ENCODE measurements at regions of chr2 and their contacts with region 1.

Region 1: DNA sequence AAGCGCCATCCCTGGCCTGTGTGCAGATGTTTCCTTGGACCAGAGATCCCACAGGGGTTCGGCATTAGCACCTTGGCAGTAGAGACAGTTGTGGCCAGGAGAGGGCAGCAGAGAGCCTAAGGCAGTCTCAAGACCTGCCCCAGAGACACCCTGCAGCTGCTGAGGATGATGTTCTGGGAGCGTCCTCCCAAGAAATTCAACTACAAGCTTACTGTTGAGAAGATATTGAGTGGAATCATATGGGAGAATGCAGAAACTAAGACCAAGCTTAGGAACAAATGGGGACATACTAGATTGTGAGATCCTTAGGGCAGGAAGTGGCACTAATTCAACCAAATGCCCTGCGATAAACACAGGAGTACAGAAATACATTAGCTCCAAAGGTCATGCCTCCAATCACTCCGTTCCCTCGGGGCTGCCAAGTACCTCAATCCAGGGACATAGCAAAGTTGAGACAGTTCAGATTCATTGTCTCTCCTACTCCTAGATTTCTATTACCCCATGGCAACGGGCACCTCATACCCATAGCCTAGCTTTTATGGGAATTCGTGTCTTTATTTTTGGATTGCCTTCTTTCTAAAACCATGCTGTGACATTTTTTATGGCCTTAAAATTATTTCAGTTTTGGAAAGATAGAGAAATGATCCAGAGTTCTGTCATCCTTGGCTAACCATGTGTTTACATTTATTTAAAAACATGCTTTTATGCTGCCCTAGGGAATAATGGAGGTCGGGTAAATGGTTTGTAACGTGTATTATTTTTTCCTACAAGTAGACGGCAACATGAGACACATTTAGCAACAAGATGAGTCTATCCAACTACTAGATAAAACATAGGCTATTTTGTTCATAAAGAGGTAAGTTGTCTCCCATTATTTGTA is 2.2 kb upstream of the ERMN start:
- DNase-seq: peak; percentile 71 to 89 (median 76)
- H3K4me3 ChIP-seq: no peak overlapping the region
- H3K4me3 Mint-ChIP-seq: peak overlapping the region in 6 of 7 donors; percentile 60 to 87 (median 70)
- H3K27ac ChIP-seq: no peak overlapping the region
- H3K27ac Mint-ChIP-seq: peak overlapping the region in 7 of 8 donors; percentile 35 to 90 (median 85)
- H3K4me1 ChIP-seq: peaks cover 41% of the 10 kb centered on the region
- H3K4me1 Mint-ChIP-seq: peaks cover 47 to 57% (median 55%) of the 10 kb centered on the region in 3 donors
- H3K27me3 ChIP-seq: no peaks in the 10 kb centered on the region
- H3K27me3 Mint-ChIP-seq: no peaks in the 10 kb centered on the region

Region 2: DNA sequence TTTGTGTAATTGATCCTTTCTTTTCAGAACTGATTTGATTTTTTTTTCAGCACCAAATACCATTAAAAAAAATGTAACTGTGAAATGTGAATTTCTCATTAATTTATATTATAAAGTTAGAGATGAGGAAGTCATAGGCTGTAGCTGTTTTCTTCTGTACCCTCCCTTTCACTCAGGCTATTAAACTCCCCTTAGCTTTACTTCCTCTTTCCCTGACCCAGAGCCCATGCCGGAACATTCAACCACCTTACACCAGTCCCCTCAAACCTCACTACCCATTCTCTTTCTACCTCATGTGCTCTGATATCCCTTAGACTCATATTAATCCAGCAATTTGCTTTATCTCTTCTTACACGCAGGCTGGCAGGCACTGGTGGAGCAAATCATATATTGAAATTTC is 57.9 kb before region 1 on chr2:
- CTCF ChIA-PET with region 1: no interaction called
- POLR2A ChIA-PET with region 1: no interaction called
- DNase-seq: no peak
- H3K4me3 ChIP-seq: no peak overlapping the region
- H3K4me3 Mint-ChIP-seq: no peak overlapping the region
- H3K27ac ChIP-seq: no peak overlapping the region
- H3K27ac Mint-ChIP-seq: no peak overlapping the region
- H3K4me1 ChIP-seq: no peaks in the 10 kb centered on the region
- H3K4me1 Mint-ChIP-seq: no peaks in the 10 kb centered on the region
- H3K27me3 ChIP-seq: no peaks in the 10 kb centered on the region
- H3K27me3 Mint-ChIP-seq: peaks cover 1 to 4% of the 10 kb centered on the region in 2 donors

Region 3: GRCh38 chr2:157315901-157316300 is 12.0 kb before region 1 on chr2:
- CTCF ChIA-PET with region 1: interaction called, 11 read pairs
- POLR2A ChIA-PET with region 1: no interaction called
- DNase-seq: no peak
- H3K4me3 ChIP-seq: no peak overlapping the region
- H3K4me3 Mint-ChIP-seq: no peak overlapping the region
- H3K27ac ChIP-seq: no peak overlapping the region
- H3K27ac Mint-ChIP-seq: no peak overlapping the region
- H3K4me1 ChIP-seq: no peaks in the 10 kb centered on the region
- H3K4me1 Mint-ChIP-seq: no peaks in the 10 kb centered on the region
- H3K27me3 ChIP-seq: no peaks in the 10 kb centered on the region
- H3K27me3 Mint-ChIP-seq: peaks cover 3 to 7% of the 10 kb centered on the region in 2 donors

Region 4: GRCh38 chr2:157413326-157414035 is 85.6 kb after region 1 on chr2:
- CTCF ChIA-PET with region 1: interaction called, 23 read pairs
- POLR2A ChIA-PET with region 1: interaction called, 3 read pairs
- DNase-seq: peak in 4 of 5 donors; percentile 21 to 88 (median 82)
- H3K4me3 ChIP-seq: peak overlapping the region; percentile 52
- H3K4me3 Mint-ChIP-seq: peak overlapping the region; percentile 21 to 62 (median 51)
- H3K27ac ChIP-seq: peak overlapping the region; percentile 40
- H3K27ac Mint-ChIP-seq: peak overlapping the region; percentile 31 to 98 (median 79)
- H3K4me1 ChIP-seq: peaks cover 94% of the 10 kb centered on the region
- H3K4me1 Mint-ChIP-seq: peaks cover 92 to 97% (median 94%) of the 10 kb centered on the region in 3 donors
- H3K27me3 ChIP-seq: no peaks in the 10 kb centered on the region
- H3K27me3 Mint-ChIP-seq: peaks cover 0 to 3% of the 10 kb centered on the region in 2 donors

Region 5: GRCh38 chr2:157443795-157444640 is 116.2 kb after region 1 on chr2 and contains the start of gene CYTIP:
- CTCF ChIA-PET with region 1: interaction called, 31 read pairs
- POLR2A ChIA-PET with region 1: interaction called, 21 read pairs
- DNase-seq: peak; percentile 19 to 80 (median 65)
- H3K4me3 ChIP-seq: peak within 1 kb of the TSS; percentile 93
- H3K4me3 Mint-ChIP-seq: peak within 1 kb of the TSS; percentile 93 to 99 (median 96)
- H3K27ac ChIP-seq: peak within 1 kb of the TSS; percentile 84
- H3K27ac Mint-ChIP-seq: peak within 1 kb of the TSS; percentile 92 to 98 (median 94)
- H3K4me1 ChIP-seq: peaks cover 38% of the 10 kb centered on the region
- H3K4me1 Mint-ChIP-seq: peaks cover 44 to 49% (median 47%) of the 10 kb centered on the region in 3 donors
- H3K27me3 ChIP-seq: no peaks in the 10 kb centered on the region
- H3K27me3 Mint-ChIP-seq: no peaks in the 10 kb centered on the region
- total RNA-seq, gene CYTIP: 195 to 202 TPM

Region 6: DNA sequence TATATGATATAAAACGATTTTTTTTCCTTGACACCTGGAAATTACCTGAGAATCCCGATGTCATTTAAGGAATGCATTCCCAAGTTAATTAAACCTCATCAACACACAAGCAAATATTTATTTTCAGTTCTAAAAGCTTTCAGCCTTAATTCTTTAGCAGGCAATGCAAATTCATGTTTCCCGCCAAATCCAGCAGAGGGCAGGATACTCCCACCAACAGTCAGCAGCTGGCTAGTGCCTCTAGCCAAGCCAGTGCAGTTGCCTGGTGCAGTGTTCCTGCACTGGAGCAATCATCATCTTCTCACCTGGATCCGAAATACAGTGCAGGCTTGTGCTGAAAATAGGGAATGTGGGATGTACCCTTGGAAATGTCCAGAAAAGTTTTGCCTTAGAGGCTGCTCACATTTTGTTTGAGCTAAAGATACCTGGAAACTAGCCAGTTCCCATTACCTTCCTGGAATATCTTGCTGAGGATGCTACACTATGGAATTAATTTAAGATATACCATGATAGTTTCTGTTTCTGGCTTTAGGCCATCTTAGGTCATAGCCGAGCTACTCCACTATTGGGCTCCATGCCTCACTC is 164.4 kb after region 1 on chr2:
- CTCF ChIA-PET with region 1: interaction called, 60 read pairs
- POLR2A ChIA-PET with region 1: no interaction called
- DNase-seq: peak; percentile 31 to 79 (median 54)
- H3K4me3 ChIP-seq: no peak overlapping the region
- H3K4me3 Mint-ChIP-seq: no peak overlapping the region
- H3K27ac ChIP-seq: no peak overlapping the region
- H3K27ac Mint-ChIP-seq: peak overlapping the region in 1 of 8 donors; percentile 22
- H3K4me1 ChIP-seq: peaks cover 14% of the 10 kb centered on the region
- H3K4me1 Mint-ChIP-seq: peaks cover 17 to 29% (median 21%) of the 10 kb centered on the region in 3 donors
- H3K27me3 ChIP-seq: no peaks in the 10 kb centered on the region
- H3K27me3 Mint-ChIP-seq: peaks cover 0 to 6% of the 10 kb centered on the region in 2 donors

Region 7: DNA sequence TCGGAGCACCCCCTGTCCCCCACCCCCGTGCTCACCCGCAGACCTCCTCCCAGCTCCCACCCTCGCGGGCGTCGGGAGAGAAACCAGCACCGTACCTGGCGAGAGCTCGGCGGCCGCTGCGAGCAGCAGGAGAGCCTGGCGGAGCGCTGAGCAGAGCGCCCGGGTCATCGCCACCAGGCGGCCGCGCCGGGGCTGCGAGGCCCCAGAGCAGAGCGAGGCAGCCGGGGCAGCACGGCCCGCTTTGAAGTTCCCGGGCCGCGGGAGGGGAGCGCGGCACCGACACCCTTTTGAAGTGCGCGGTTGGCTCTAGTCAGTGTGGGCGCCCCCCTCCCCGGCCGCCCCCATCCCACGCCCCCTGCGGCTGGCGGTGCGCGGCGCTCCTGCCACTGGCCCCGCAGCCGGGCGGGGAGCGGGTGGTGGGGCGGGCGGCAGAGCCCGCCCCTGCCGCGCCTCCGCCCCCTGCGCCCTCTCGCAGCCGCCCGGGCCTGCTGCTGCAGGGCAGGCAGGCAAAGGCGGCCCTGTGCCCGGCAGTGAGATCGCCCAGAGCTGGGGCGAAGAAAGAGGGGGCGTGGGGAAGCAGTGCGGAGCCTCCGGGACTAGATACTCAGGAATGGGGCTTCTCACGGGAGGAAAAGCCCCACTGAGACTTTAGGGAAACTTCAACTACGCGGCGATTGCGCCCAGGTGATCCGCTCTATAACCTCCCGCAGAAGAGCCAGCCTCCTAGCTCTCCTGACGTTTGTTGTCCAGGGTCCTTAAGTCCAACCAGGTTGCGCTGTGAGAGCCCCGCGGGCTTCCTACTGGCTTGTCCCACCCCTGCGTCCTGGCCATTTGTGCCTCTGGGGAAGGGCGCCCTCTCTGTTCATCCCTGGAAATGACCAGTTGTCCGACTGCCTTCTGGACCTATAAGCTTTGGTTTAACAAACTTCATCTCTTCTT is 300.9 kb after region 1 on chr2 and contains the start of gene ACVR1C:
- CTCF ChIA-PET with region 1: interaction called, 16 read pairs
- POLR2A ChIA-PET with region 1: interaction called, 3 read pairs
- DNase-seq: peak; percentile 60 to 78 (median 70)
- H3K4me3 ChIP-seq: peak within 1 kb of the TSS; percentile 77
- H3K4me3 Mint-ChIP-seq: peak within 1 kb of the TSS; percentile 88 to 97 (median 94)
- H3K27ac ChIP-seq: peak within 1 kb of the TSS; percentile 34
- H3K27ac Mint-ChIP-seq: peak within 1 kb of the TSS; percentile 58 to 94 (median 82)
- H3K4me1 ChIP-seq: peaks cover 18% of the 10 kb centered on the region
- H3K4me1 Mint-ChIP-seq: peaks cover 32 to 45% (median 34%) of the 10 kb centered on the region in 3 donors
- H3K27me3 ChIP-seq: no peaks in the 10 kb centered on the region
- H3K27me3 Mint-ChIP-seq: peaks cover 2 to 4% of the 10 kb centered on the region in 2 donors
- total RNA-seq, gene ACVR1C: 0.61 to 0.66 TPM